Calu3 (cell line): ENCODE measurements at regions of chr6 and their contacts with region 1.

Region 1: DNA sequence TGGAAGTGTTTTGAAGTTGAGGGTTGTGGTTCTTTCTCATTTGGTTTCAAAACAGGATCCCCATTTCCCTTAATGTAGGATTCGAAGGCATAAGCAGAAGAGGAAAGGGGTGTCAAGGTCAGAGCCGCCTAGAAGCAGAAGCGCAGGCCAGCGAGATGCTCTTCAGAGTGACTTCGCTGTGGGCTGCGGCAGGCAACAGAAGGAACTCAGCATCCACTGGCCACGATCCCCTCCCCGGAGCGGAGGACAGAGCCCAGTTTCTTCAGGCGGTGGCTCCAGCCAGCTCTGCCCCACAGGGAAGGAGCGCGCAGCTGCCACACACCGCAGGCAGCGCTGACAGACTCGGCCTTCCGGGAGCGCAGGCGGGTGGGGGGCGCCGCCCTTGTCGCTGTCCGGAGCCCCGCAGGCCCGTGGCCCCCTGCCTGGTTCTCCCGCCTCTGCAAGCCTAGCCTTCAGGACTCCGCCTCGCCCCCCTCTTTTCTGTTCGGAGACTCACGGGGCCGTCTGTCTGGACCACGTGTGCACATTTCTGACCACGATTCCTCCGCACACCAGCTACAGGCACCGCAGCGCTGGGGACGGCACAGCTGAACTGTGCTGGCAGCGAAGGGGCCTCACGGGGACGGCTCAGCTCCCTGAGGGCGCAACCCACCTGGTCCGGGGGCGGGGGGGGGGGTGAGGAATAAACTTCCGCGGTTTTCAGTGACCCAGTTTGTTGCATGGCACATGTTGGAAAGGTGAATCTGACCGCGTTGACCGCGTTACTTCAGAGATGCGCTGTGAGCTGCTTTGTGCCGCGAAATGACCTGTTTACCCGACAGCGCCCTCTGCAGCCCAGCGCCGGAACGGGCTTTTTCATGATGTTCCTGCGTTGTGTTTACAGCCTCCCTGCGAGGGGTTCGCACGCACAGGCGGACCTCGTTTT is 26.1 kb downstream of the TTLL2 start:
- DNase-seq: peak; percentile 87
- H3K4me3 Mint-ChIP-seq: peak overlapping the region; percentile 74
- H3K27ac Mint-ChIP-seq: no peak overlapping the region
- H3K4me1 Mint-ChIP-seq: peaks cover 13% of the 10 kb centered on the region
- H3K27me3 Mint-ChIP-seq: peaks cover 54% of the 10 kb centered on the region
- CTCF ChIP-seq: peak; percentile 90

Region 2: GRCh38 chr6:167219967-167220512 is 131.0 kb before region 1 on chr6:
- CTCF ChIA-PET with region 1: interaction called, 10 read pairs
- intact Hi-C with region 1: loop called (anchors 5 kb)
- DNase-seq: no peak
- H3K4me3 Mint-ChIP-seq: no peak overlapping the region
- H3K27ac Mint-ChIP-seq: peak overlapping the region; percentile 52
- H3K4me1 Mint-ChIP-seq: peaks cover 18% of the 10 kb centered on the region
- H3K27me3 Mint-ChIP-seq: no peaks in the 10 kb centered on the region
- CTCF ChIP-seq: no peak

Region 3: GRCh38 chr6:167291623-167292300 is 59.2 kb before region 1 on chr6:
- CTCF ChIA-PET with region 1: interaction called, 12 read pairs
- intact Hi-C with region 1: loop called (anchors 5 kb)
- DNase-seq: no peak
- H3K4me3 Mint-ChIP-seq: no peak overlapping the region
- H3K27ac Mint-ChIP-seq: no peak overlapping the region
- H3K4me1 Mint-ChIP-seq: peaks cover 32% of the 10 kb centered on the region
- H3K27me3 Mint-ChIP-seq: peaks cover 43% of the 10 kb centered on the region
- CTCF ChIP-seq: no peak

Region 4: DNA sequence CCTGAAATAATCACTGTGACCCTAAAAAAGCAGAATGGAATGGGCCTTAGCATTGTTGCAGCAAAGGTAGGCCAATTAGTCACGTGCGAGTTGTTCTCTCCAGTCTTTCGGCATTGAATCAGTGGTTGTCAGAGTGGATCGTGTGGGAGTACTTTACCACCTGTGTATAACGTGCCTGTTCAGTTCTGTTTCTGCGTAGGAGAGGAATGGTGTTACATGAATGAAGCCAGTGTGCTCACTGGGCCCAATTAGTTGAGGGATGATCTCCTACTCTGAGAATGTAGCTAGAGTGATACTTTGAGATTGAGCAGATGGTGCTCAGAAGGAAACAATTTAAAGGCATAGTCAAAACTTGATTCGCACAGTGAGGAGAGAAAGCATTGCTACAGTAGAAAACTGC is 574.0 kb after region 1 on chr6:
- CTCF ChIA-PET with region 1: no interaction called
- intact Hi-C with region 1: no loop called
- DNase-seq: no peak
- H3K4me3 Mint-ChIP-seq: no peak overlapping the region
- H3K27ac Mint-ChIP-seq: no peak overlapping the region
- H3K4me1 Mint-ChIP-seq: peaks cover 2% of the 10 kb centered on the region
- H3K27me3 Mint-ChIP-seq: no peaks in the 10 kb centered on the region
- CTCF ChIP-seq: no peak